ENCODE measurements at regions of chr20 and their contacts with region 1.

Region 1: DNA sequence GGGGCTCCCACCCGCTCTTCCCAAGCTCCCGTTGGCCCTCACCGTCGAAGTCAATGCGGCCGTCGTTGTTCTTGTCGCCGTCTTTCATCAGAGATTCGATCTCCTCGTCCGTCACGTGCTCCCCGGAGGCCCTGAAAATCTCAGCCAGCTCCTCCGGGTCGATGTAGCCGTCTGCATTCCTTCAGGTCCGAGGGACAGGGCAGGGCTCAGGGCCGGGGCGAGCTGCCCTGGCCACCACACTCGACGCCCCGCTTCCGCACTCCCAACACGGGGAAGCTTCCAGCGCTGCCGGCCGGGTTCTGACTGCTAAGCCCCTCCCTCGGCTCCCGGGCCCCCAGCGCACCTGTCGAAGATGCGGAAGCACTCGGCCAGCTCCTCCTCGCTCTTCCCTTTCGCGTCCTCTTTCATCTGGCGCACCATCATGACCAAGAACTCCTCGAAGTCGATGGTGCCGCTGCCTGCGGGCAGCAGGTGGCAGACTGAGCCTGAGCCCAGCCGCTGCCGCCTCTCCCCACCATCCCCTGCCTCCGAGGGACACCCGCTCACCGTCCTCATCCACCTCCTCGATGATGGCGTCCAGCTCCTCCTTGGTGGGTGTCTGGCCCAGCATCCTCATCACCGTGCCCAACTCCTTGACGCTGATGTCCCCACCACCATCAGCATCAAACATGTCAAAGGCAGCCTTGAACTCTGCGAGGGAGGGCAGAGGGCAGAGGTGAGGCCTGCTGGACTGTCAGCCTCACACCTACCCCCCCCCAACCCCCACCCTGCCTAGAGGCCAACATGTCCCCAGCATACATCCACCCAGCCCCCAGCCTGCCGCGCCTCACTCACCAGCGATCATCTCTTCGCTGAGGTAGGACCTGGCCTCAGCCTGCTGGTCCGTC is 2.9 kb downstream of the TNNC2 start:
- DNase-seq: peak; percentile 68 to 75 (median 75)
- ATAC-seq: peak; percentile 71
- H3K4me3 ChIP-seq: no peak overlapping the region
- H3K4me1 ChIP-seq: peaks cover 11% of the 10 kb centered on the region
- CTCF ChIP-seq: no peak

Region 2: DNA sequence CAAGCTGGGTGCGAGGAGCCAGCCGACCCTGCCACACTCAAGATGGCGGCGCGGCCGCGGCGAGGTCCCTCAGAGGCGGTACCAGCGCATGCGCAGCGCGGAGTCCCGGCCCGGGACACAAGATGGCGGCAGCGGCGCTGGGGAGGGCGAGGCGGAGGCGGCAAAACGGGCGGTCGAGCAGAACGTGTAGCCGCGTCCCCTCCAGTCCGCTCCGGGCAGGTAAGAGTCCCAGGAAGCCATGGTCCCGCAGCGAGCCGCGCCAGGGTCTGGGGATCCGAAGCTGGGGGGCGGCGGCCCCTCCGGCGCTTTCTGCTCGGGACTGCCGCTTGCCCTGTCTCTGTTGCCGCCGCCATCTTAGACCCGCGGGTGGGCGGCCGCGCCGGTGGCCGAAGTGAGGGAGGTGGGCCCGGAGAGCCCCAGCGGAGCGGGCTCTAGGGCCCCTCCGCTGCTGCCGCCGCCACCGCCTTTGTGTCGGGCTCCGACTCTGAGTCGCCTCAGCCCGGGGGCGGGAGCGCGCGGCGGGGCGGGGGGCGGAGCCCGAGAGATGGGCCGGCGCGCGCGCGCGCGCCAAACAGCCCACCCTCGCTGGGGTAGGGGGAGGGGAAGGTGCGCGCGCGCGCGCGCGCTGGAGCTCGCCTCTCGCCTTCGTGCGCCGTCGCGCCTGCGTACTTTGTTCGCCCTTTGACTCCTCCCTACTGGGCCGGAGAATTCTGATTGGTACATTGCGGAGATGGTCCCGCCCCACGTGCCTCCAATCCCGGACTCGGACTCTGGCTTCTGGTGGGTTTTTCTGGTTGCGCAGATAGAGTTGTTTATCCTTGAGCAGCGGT is 110.6 kb after region 1 on chr20 and contains the start of gene PCIF1:
- intact Hi-C with region 1: loop called in 1 of 2 experiments (anchors 10 kb)
- DNase-seq: peak; percentile 98
- ATAC-seq: peak; percentile 94
- H3K4me3 ChIP-seq: peak within 1 kb of the TSS; percentile 85
- H3K4me1 ChIP-seq: peaks cover 6% of the 10 kb centered on the region
- CTCF ChIP-seq: no peak
- total RNA-seq, gene PCIF1: 29.2 to 37.8 (median 35.1) TPM